ENCODE measurements at regions of chr1 and their contacts with region 1.

Region 1: DNA sequence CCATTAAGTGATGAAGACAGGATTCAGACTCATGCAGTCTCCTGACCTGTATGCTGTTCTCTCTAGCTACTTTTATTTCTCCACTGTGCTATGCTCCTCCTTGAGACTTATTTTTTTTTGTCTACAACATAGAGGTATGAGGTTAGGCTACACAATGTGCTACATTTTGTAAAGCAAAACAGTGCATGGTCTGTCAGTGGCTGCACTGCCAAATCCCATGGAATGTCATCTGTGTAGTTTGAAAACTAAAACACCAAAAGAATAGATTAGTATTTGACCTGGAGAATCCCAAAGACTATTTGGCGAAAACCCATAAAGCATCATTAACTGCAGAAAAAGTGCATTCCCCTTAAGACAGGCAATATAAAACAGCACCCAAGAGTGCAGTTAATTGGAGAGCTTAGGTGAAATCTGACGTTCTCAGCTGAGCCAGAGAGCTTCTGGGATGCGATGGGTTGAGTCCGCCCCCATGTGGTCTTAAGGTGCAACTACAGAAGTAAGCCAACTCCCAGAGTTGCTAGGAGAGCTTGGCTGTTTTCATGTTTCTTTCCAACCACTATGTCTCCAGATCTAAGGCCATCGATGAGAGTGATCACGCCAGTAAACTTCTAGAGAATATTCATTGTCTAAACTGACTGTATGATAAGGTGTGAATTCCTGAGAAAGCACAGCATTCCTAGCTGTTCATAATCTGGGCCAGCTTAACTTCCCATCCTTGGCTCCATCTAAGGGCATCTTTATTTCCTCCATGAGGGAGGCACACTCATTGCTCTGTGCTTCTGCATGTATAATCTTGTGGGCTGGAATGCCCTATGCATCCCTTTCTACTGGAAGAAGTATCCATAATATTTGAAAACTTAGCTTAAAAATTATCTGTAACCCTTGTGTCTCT is 20.7 kb upstream of the CYP2J2 start:
- DNase-seq: peak; percentile 53 to 58
- H3K4me3 ChIP-seq: no peak overlapping the region
- H3K27ac ChIP-seq: no peak overlapping the region
- H3K4me1 ChIP-seq: no peaks in the 10 kb centered on the region
- H3K27me3 ChIP-seq: no peaks in the 10 kb centered on the region
- CTCF ChIP-seq: peak; percentile 95

Region 2: GRCh38 chr1:58515794-58516401 is 1431.4 kb before region 1 on chr1:
- CTCF ChIA-PET with region 1: no interaction called
- POLR2A ChIA-PET with region 1: no interaction called
- intact Hi-C with region 1: loop called (anchors 2 kb)
- DNase-seq: peak; percentile 25 to 61
- H3K4me3 ChIP-seq: no peak overlapping the region
- H3K27ac ChIP-seq: no peak overlapping the region
- H3K4me1 ChIP-seq: no peaks in the 10 kb centered on the region
- H3K27me3 ChIP-seq: no peaks in the 10 kb centered on the region
- CTCF ChIP-seq: peak; percentile 86

Region 3: GRCh38 chr1:59779949-59780348 is 167.3 kb before region 1 on chr1:
- CTCF ChIA-PET with region 1: interaction called, 4 read pairs
- POLR2A ChIA-PET with region 1: no interaction called
- intact Hi-C with region 1: loop called (anchors 5 kb)
- DNase-seq: no peak
- H3K4me3 ChIP-seq: no peak overlapping the region
- H3K27ac ChIP-seq: no peak overlapping the region
- H3K4me1 ChIP-seq: no peaks in the 10 kb centered on the region
- H3K27me3 ChIP-seq: no peaks in the 10 kb centered on the region
- CTCF ChIP-seq: no peak

Region 4: GRCh38 chr1:59856725-59857338 is 90.5 kb before region 1 on chr1:
- CTCF ChIA-PET with region 1: no interaction called
- POLR2A ChIA-PET with region 1: no interaction called
- intact Hi-C with region 1: no loop called
- DNase-seq: no peak
- H3K4me3 ChIP-seq: no peak overlapping the region
- H3K27ac ChIP-seq: no peak overlapping the region
- H3K4me1 ChIP-seq: no peaks in the 10 kb centered on the region
- H3K27me3 ChIP-seq: no peaks in the 10 kb centered on the region
- CTCF ChIP-seq: no peak

Region 5: GRCh38 chr1:59879574-59879973 is 67.7 kb before region 1 on chr1:
- CTCF ChIA-PET with region 1: interaction called, 48 read pairs
- POLR2A ChIA-PET with region 1: no interaction called
- intact Hi-C with region 1: loop called (anchors 1 kb)
- DNase-seq: peak; percentile 50 to 70
- H3K4me3 ChIP-seq: no peak overlapping the region
- H3K27ac ChIP-seq: no peak overlapping the region
- H3K4me1 ChIP-seq: no peaks in the 10 kb centered on the region
- H3K27me3 ChIP-seq: no peaks in the 10 kb centered on the region
- CTCF ChIP-seq: peak; percentile 82

Region 6: DNA sequence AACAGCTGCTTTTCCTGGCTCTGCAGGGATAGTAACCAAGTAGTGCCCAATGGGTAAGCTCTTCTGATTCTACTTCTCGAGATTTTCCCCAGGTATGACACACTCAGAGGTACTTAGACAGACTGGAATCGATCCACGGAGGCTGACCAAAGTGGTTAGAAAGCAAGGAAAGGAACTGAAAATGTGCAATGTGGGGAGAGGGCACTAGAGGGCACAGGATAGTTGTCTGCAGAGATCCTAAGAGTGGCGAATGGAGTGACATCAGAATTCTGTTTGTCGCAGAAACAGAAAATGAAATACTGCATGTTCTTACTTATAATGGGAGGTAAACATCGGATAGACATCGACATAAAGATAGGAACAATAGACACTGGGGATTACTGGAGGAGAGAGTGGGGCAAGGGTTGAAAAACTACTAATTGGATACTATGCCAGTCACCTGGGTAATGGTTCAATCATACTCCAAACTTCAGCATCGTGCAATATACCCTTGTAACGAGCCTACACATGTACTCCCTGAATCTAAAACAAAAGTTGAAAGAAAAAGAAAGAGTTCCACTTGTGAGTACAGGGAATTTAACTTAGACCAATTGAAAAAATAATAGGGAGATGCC is 44.0 kb before region 1 on chr1:
- CTCF ChIA-PET with region 1: no interaction called
- POLR2A ChIA-PET with region 1: no interaction called
- intact Hi-C with region 1: loop called (anchors 1 kb)
- DNase-seq: no peak
- H3K4me3 ChIP-seq: no peak overlapping the region
- H3K27ac ChIP-seq: no peak overlapping the region
- H3K4me1 ChIP-seq: peaks cover 12% of the 10 kb centered on the region
- H3K27me3 ChIP-seq: no peaks in the 10 kb centered on the region
- CTCF ChIP-seq: peak; percentile 45; the same call in 1 of the 2 replicates

Region 7: DNA sequence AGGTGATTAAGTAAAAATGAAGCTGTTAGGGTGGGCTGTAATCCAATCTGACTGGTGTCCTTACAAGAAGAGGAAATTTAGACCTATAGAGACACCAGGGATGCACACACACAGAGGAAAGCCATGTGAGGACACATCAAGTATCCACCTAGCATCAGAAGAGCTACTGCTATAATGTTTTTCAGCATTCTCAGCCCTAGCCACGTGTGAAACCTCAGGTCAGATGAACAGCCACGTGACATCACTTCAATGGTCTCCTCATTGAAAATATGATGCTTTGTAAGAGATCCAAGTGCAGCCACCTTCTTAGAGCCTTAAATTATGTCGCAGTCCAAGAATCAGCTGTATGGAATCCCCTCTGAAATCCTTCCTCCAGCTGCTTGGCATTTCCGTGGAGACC is 61.2 kb after region 1 on chr1:
- CTCF ChIA-PET with region 1: no interaction called
- POLR2A ChIA-PET with region 1: no interaction called
- intact Hi-C with region 1: no loop called
- DNase-seq: no peak
- H3K4me3 ChIP-seq: no peak overlapping the region
- H3K27ac ChIP-seq: no peak overlapping the region
- H3K4me1 ChIP-seq: no peaks in the 10 kb centered on the region
- H3K27me3 ChIP-seq: no peaks in the 10 kb centered on the region
- CTCF ChIP-seq: no peak